Naive thymus-derived CD4-positive, alpha-beta T cell (primary cell): ENCODE measurements at regions of chr2 and their contacts with region 1.

Region 1: DNA sequence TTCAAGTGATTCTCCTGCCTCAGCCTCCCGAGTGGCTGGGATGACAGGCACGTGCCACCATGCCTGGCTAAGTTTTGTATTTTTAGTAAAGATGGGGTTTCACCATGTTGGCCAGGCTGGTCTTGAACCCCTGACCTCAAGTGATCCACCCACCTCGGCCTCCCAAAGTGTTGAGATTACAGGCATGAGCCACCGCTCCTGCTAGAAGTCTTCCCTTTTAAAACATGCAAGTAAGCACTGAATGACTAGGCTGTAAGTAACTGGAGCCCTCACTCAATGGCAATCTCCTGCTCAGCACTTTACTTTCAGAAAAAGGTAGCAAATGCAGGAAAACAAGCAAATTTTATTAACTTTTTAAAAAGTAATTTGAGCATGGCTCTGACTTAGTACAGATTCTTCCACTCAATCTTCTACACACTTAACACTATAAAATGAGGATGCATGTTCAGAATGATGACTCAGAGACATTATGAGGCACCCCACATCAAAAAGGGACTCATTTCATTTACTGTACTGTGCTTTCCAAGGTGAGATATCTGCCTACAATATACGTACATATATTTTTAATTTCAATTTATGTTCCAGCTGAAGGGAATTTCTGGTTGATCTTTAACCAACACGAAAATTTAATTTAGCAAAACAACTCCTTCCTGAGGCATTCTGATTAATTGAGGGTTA is 6.6 kb upstream of the NCK2 start:
- DNase-seq: peak in 6 of 9 donors; percentile 56 to 77 (median 70)
- ATAC-seq: peak; percentile 88
- H3K4me3 ChIP-seq: peak overlapping the region; percentile 37
- H3K4me3 Mint-ChIP-seq: peak overlapping the region; percentile 54 to 84 (median 80)
- H3K27ac ChIP-seq: peak overlapping the region; percentile 74
- H3K27ac Mint-ChIP-seq: peak overlapping the region; percentile 90 to 99 (median 96)
- H3K4me1 ChIP-seq: peaks cover 40 to 41% of the 10 kb centered on the region in 2 donors
- H3K4me1 Mint-ChIP-seq: peaks cover 47 to 88% (median 83%) of the 10 kb centered on the region in 7 donors
- H3K27me3 ChIP-seq: no peaks in the 10 kb centered on the region
- H3K27me3 Mint-ChIP-seq: no peaks in the 10 kb centered on the region

Region 2: DNA sequence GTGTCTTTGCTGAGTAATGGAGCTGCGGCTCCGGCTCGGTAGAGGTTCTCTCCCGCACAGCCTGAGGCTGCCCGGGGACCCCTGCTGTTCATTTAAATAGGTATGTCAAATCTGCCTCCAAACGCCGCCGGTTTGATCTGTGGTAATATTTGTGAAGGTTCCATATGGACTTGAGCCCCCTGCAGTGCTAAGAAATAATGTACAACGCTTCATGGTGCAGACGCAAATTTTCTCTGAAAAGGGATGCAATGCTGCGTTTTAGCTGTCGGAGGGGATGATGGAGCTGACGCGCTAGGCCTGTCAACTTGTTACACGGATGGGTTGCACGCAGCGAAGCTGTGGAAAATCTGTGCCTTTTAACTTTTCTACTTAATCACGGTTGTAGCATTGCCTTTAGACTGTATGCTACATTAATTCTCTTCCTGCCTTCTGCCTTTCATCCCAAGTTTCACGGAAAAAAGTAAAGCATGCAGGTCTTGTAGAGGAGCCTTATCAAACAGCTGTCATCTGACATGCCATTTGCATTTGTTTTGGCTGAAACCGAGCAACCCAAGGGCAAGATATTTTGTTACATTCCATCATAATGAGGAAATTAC is 657.0 kb before region 1 on chr2:
- CTCF ChIA-PET with region 1: no interaction called
- POLR2A ChIA-PET with region 1: no interaction called
- intact Hi-C with region 1: no loop called
- DNase-seq: no peak
- ATAC-seq: no peak
- H3K4me3 ChIP-seq: no peak overlapping the region
- H3K4me3 Mint-ChIP-seq: no peak overlapping the region
- H3K27ac ChIP-seq: no peak overlapping the region
- H3K27ac Mint-ChIP-seq: no peak overlapping the region
- H3K4me1 ChIP-seq: no peaks in the 10 kb centered on the region
- H3K4me1 Mint-ChIP-seq: peaks cover 0 to 3% (median 0%) of the 10 kb centered on the region in 7 donors
- H3K27me3 ChIP-seq: no peaks in the 10 kb centered on the region
- H3K27me3 Mint-ChIP-seq: no peaks in the 10 kb centered on the region

Region 3: DNA sequence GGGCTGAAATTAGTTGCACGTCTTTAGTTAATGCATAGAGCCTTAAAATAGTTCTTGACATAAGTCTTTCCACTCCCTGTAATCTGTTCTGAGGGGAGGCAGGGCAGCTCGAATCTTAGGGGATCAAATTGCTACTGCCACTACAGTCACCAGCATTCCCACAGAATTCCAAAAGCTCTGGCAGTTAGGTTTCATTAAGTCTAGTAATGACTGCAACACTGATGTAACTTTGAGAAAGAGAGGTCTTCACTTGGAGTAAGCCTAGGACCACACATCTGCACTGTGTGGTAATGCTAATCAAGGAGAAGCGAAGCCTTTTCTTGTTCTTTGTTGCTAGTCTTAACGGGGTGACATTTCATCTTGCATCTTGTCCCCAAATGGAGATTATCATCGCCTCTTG is 12.7 kb before region 1 on chr2:
- CTCF ChIA-PET with region 1: no interaction called
- POLR2A ChIA-PET with region 1: interaction called, 4 read pairs
- intact Hi-C with region 1: loop called in 1 of 2 experiments (anchors 1 kb)
- DNase-seq: no peak
- ATAC-seq: no peak
- H3K4me3 ChIP-seq: no peak overlapping the region
- H3K4me3 Mint-ChIP-seq: no peak overlapping the region
- H3K27ac ChIP-seq: no peak overlapping the region
- H3K27ac Mint-ChIP-seq: no peak overlapping the region
- H3K4me1 ChIP-seq: no peaks in the 10 kb centered on the region
- H3K4me1 Mint-ChIP-seq: peaks cover 0 to 15% (median 0%) of the 10 kb centered on the region in 7 donors
- H3K27me3 ChIP-seq: no peaks in the 10 kb centered on the region
- H3K27me3 Mint-ChIP-seq: peaks cover 0 to 2% (median 0%) of the 10 kb centered on the region in 5 donors